ENCODE measurements at regions of chr12 and their contacts with region 1.

Region 1: DNA sequence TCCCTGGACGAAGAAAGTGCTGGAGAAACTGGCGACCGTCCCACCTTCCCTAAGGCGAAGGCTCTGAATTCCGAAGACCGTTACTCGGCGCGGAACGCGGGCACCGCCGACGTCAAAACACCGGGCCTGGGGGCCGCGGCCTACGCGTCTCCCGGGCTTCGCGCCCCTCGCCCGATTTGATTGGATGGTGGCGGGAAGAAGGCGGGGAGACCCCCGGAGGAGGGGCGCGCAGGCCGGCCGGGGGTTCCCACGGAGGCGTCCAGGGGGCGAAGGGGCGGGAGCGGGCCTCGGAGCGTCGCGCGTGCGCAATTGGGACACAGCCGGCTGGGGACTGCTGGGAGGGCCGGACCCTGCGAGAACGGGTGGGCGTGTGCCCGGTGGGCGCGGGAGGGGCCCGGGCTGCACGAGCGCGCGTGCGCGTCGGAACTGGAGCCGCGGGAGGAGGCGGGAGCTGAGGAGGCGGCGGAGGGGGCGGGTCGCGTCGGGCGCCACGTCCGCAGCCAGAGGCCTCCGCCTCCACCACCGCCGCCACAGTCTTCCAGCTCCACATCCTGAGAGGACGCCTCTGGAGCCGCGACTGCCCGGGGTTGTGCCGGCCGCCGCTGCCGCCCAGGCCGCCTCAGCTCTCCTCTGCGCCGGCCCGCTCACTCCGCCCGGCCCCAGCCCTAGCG is at the start of gene TMEM263:
- DNase-seq: peak; percentile 89 to 98
- ATAC-seq: peak; percentile 84 to 87
- H3K4me3 ChIP-seq: peak within 1 kb of the TSS; percentile 91
- H3K27ac ChIP-seq: peak within 1 kb of the TSS; percentile 97 to 98
- H3K4me1 ChIP-seq: peaks cover 29% of the 10 kb centered on the region; the same call in 2 of the 3 replicates
- CTCF ChIP-seq: no peak
- EP300 ChIP-seq: no peak
- POLR2A ChIP-seq: peak; percentile 95
- RAD21 ChIP-seq: no peak
- polyA plus RNA-seq, gene TMEM263: 35.9 and 45.6 TPM in 2 replicates

Region 2: DNA sequence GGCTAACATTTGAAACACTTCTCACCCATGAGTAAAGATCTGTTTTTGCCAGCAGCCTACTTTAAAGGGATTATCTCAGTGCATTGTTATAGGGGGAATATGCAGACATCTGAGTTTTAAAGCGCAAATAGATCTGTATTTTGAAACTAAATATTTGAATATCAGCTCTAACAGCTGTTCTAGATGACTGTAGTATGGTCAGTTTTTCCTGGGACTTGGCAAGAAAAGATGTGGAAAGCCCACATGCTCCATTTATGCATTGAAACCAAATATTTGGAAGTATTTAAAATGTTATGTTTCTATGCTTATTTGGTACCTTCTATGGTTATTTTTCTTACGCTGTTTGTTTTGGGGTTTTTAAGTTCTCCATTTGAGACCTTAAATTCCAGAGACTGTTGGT is 139.3 kb before region 1 on chr12:
- CTCF ChIA-PET with region 1: no interaction called
- POLR2A ChIA-PET with region 1: no interaction called
- DNase-seq: no peak
- ATAC-seq: no peak
- H3K4me3 ChIP-seq: no peak overlapping the region
- H3K27ac ChIP-seq: no peak overlapping the region
- H3K4me1 ChIP-seq: no peaks in the 10 kb centered on the region
- CTCF ChIP-seq: no peak
- EP300 ChIP-seq: no peak
- POLR2A ChIP-seq: no peak
- RAD21 ChIP-seq: no peak

Region 3: DNA sequence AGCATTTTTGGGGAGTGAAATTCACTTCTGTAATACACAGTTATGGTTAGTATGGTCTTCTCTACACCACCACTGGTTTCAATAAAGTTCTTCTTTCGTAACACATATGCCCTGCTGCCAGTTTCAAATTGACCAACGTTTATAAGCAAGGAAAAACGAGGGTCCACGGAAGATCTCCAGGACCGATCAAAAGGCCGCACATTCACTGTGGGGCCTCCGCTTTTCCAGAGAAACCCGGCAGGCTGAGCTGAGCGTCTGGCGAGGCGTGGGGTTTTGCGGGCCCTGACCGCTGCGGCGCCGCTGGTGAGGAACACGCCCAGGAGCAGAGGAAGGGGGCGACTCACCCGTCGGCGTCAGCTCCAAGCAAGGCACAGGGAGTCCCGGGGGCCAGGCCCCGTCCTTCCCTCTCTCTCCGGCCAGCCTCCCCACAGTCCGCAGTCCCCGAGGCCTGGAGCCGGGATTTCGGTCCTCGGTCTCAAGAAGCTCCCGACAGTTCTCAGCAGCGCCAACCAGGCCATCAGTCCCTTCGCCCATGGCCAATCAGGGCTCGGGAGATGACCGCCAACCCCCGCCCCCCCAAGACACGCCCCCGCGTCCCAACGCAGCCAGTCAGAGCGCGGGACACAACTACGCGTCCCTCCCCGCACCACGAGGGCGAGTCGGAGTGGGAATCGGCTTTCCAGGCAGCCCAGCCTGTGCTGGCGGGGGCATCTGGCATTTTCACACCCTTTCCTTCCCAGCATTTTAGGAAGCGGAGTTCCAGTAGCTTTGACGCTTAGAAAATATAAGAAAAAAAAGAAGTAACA is 31.3 kb after region 1 on chr12 and contains the start of gene MTERF2:
- CTCF ChIA-PET with region 1: no interaction called
- POLR2A ChIA-PET with region 1: interaction called, 24 read pairs
- DNase-seq: peak; percentile 96
- ATAC-seq: peak; percentile 98
- H3K4me3 ChIP-seq: peak within 1 kb of the TSS; percentile 50
- H3K27ac ChIP-seq: peak within 1 kb of the TSS; percentile 67 to 93
- H3K4me1 ChIP-seq: peaks cover 13% of the 10 kb centered on the region; the same call in 2 of the 3 replicates
- CTCF ChIP-seq: no peak
- EP300 ChIP-seq: no peak
- POLR2A ChIP-seq: peak; percentile 70
- RAD21 ChIP-seq: no peak
- polyA plus RNA-seq, gene MTERF2: 10.6 and 13.9 TPM in 2 replicates

Region 4: GRCh38 chr12:107027636-107028053 is 72.1 kb after region 1 on chr12:
- CTCF ChIA-PET with region 1: no interaction called
- POLR2A ChIA-PET with region 1: no interaction called
- DNase-seq: peak; percentile 60 to 87
- ATAC-seq: peak; percentile 94 to 98
- H3K4me3 ChIP-seq: peak overlapping the region; percentile 2; the same call in 1 of the 3 replicates
- H3K27ac ChIP-seq: peak overlapping the region; percentile 6 to 12; a peak in 1 of 6 replicates
- H3K4me1 ChIP-seq: peaks cover 28% of the 10 kb centered on the region
- CTCF ChIP-seq: no peak
- EP300 ChIP-seq: no peak
- POLR2A ChIP-seq: no peak
- RAD21 ChIP-seq: no peak